PC-9 (cell line): ENCODE measurements at regions of chr3 and their contacts with region 1.

Region 1: GRCh38 chr3:128863560-128863959 is 15.9 kb upstream of the ACAD9 start:
- DNase-seq: no peak
- H3K4me3 ChIP-seq: no peak overlapping the region
- H3K27ac ChIP-seq: no peak overlapping the region
- H3K4me1 ChIP-seq: no peaks in the 10 kb centered on the region
- H3K27me3 ChIP-seq: no peaks in the 10 kb centered on the region
- CTCF ChIP-seq: peak; percentile 38; the same call in 1 of the 2 replicates

Region 2: GRCh38 chr3:128686465-128686864 is 177.1 kb before region 1 on chr3:
- CTCF ChIA-PET with region 1: interaction called, 10 read pairs
- POLR2A ChIA-PET with region 1: no interaction called
- intact Hi-C with region 1: no loop called
- DNase-seq: no peak
- H3K4me3 ChIP-seq: no peak overlapping the region
- H3K27ac ChIP-seq: no peak overlapping the region
- H3K4me1 ChIP-seq: peaks cover 6% of the 10 kb centered on the region
- H3K27me3 ChIP-seq: no peaks in the 10 kb centered on the region
- CTCF ChIP-seq: no peak

Region 3: DNA sequence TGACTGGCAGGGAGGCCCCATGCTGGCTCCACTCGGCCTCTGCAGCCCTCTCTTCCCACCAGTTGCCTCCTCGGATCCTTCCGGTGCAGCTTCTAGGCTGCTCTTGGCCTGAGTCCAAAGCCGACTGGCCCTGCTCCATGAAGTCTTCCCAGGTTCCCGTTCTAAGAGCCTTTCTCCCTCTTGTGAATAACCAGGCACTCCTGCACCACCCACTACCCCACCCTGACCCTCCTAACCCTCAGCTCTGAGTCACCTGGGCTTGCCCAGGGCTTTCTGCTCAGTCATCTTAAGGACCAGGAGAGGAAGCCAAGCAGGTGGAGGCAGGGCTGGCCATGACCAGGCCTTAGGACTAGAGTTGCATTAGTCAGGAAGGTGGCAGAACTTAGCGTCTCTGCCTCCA is 348.2 kb after region 1 on chr3:
- CTCF ChIA-PET with region 1: no interaction called
- POLR2A ChIA-PET with region 1: no interaction called
- intact Hi-C with region 1: no loop called
- DNase-seq: peak; percentile 98
- H3K4me3 ChIP-seq: no peak overlapping the region
- H3K27ac ChIP-seq: peak overlapping the region; percentile 75
- H3K4me1 ChIP-seq: peaks cover 21% of the 10 kb centered on the region
- H3K27me3 ChIP-seq: no peaks in the 10 kb centered on the region
- CTCF ChIP-seq: no peak